Tibial artery (tissue), 4 donors: ENCODE measurements at regions of chr2 and their contacts with region 1.

Region 1: DNA sequence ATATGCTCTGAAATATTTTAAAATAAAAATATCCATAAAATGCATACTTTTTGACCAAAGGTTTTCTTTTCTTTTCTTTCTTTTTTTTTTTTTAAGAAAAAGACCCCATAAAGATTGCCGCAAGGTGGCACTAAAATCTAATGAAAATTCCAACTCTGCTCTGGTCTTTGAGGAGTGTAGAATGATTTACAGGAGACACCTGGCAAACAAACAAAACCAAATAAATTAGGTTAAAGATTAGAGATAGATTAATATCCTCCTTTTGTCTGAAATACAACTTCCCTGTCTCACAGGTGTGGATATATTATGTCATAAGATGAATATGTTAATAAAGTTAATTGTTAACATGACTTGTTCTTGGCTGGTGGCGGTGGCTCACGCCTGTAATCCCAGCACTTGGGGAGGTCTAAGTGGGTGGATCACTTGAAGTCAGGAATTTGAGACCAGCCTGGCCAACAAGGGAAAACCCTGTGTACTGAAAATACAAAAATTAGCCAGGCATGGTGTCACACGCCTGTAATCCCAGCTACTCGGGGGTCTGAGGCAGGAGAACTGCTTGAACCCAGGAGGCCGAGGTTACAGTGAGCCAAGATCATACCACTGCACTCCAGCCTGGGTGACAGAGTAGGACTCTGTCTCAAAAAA is 3.5 kb upstream of the RHOB start:
- DNase-seq: peak; percentile 60 to 82
- H3K4me3 ChIP-seq: peak overlapping the region in 1 of 2 donors; percentile 93
- H3K27ac ChIP-seq: peak overlapping the region; percentile 82 to 88
- H3K4me1 ChIP-seq: peaks cover 0 to 54% (median 27%) of the 10 kb centered on the region in 4 donors
- H3K27me3 ChIP-seq: no peaks in the 10 kb centered on the region
- CTCF ChIP-seq: peak; percentile 42 to 45

Region 2: DNA sequence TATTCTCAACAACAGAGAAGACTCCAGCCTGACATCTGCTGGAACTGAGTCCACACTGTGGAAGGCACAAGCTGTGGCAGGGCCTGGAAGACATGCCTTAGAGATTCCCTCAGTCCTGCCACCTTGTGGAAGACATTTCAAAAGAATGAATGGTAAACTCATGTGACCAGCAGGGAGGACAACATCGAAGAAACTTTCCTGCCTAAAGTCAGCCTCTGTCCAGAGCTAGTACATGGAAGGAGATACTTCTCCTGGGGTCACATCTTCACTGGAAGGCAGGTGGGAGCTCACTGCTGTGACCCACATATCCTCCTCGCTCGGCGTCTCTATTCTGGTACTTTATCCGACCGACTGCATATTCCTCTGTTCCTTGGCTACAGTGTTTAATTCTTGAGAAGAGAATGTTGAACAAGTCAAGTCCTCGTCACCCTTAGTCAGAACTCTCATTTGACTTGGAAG is 152.3 kb before region 1 on chr2:
- intact Hi-C with region 1: no loop called
- DNase-seq: no peak
- H3K4me3 ChIP-seq: no peak overlapping the region
- H3K27ac ChIP-seq: no peak overlapping the region
- H3K4me1 ChIP-seq: no peaks in the 10 kb centered on the region
- H3K27me3 ChIP-seq: no peaks in the 10 kb centered on the region
- CTCF ChIP-seq: peak; percentile 30 to 47

Region 3: DNA sequence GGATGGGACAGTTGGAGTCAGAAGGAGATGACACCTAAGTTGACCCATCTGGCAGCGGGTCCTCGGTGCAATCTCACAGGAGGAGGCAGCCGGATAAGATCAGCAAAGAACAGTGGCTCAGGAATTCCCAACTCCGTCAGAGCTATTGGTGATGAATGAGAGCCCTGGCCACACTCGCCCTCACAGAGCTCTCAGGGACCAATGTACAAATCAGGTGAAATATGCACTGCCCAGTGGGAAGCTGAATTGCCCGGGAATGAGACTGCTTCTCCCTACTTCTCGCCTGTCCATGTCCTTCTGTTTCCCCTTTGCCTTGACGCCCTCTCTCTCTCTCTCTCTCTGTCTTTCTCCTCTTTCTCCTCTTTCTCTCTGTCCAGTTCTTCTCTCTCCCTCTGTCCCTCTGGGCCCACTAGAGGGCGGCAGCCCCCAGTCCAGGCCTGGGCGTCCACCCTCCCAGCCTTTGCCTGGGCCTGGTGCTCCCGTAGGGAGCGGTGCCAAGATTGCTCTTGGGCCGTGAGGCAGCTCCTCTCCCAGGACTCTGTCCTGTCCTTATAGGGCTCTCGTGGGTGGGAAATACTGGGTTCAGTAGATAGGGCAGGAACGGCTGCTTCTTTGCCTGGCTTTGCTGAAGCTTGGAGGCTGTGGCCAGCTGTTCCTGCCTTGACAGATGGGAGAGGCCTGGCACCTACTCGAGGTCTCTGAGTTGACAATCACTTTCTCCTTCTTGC is 64.4 kb before region 1 on chr2:
- intact Hi-C with region 1: no loop called
- DNase-seq: peak; percentile 84 to 95
- H3K4me3 ChIP-seq: no peak overlapping the region
- H3K27ac ChIP-seq: peak overlapping the region; percentile 60 to 74
- H3K4me1 ChIP-seq: peaks cover 0 to 19% (median 10%) of the 10 kb centered on the region in 4 donors
- H3K27me3 ChIP-seq: no peaks in the 10 kb centered on the region
- CTCF ChIP-seq: peak; percentile 81

Region 4: GRCh38 chr2:20483194-20483895 is 39.9 kb after region 1 on chr2:
- intact Hi-C with region 1: no loop called
- DNase-seq: peak; percentile 87 to 91
- H3K4me3 ChIP-seq: no peak overlapping the region
- H3K27ac ChIP-seq: peak overlapping the region; percentile 59 to 75
- H3K4me1 ChIP-seq: peaks cover 0 to 34% (median 23%) of the 10 kb centered on the region in 4 donors
- H3K27me3 ChIP-seq: no peaks in the 10 kb centered on the region
- CTCF ChIP-seq: no peak

Region 5: GRCh38 chr2:20635675-20636584 is 192.5 kb after region 1 on chr2:
- intact Hi-C with region 1: loop called (anchors 2 kb)
- DNase-seq: peak; percentile 90 to 95
- H3K4me3 ChIP-seq: peak overlapping the region in 1 of 2 donors; percentile 30
- H3K27ac ChIP-seq: peak overlapping the region; percentile 95 to 98
- H3K4me1 ChIP-seq: peaks cover 0 to 84% (median 57%) of the 10 kb centered on the region in 4 donors
- H3K27me3 ChIP-seq: no peaks in the 10 kb centered on the region
- CTCF ChIP-seq: peak; percentile 96